Thyroid gland (tissue), 4 donors: ENCODE measurements at regions of chr4 and their contacts with region 1.

Region 1: GRCh38 chr4:142353149-142353738 is 492.9 kb downstream of the INPP4B start:
- DNase-seq: peak in 1 of 2 donors; percentile 18
- H3K4me3 ChIP-seq: no peak overlapping the region
- H3K27ac ChIP-seq: no peak overlapping the region
- H3K4me1 ChIP-seq: peaks cover 11 to 19% of the 10 kb centered on the region in 2 donors
- H3K27me3 ChIP-seq: no peaks in the 10 kb centered on the region
- CTCF ChIP-seq: peak; percentile 59 to 96 (median 86)
- POLR2A ChIP-seq: no peak

Region 2: GRCh38 chr4:142293536-142293935 is 59.7 kb before region 1 on chr4:
- intact Hi-C with region 1: no loop called
- DNase-seq: no peak
- H3K4me3 ChIP-seq: no peak overlapping the region
- H3K27ac ChIP-seq: no peak overlapping the region
- H3K4me1 ChIP-seq: no peaks in the 10 kb centered on the region
- H3K27me3 ChIP-seq: no peaks in the 10 kb centered on the region
- CTCF ChIP-seq: no peak
- POLR2A ChIP-seq: no peak

Region 3: GRCh38 chr4:142474335-142475087 is 121.3 kb after region 1 on chr4:
- intact Hi-C with region 1: no loop called
- DNase-seq: peak; percentile 62 to 71
- H3K4me3 ChIP-seq: no peak overlapping the region
- H3K27ac ChIP-seq: peak overlapping the region in 1 of 3 donors; percentile 29
- H3K4me1 ChIP-seq: peaks cover 8 to 15% of the 10 kb centered on the region in 2 donors
- H3K27me3 ChIP-seq: no peaks in the 10 kb centered on the region
- CTCF ChIP-seq: no peak
- POLR2A ChIP-seq: no peak

Region 4: DNA sequence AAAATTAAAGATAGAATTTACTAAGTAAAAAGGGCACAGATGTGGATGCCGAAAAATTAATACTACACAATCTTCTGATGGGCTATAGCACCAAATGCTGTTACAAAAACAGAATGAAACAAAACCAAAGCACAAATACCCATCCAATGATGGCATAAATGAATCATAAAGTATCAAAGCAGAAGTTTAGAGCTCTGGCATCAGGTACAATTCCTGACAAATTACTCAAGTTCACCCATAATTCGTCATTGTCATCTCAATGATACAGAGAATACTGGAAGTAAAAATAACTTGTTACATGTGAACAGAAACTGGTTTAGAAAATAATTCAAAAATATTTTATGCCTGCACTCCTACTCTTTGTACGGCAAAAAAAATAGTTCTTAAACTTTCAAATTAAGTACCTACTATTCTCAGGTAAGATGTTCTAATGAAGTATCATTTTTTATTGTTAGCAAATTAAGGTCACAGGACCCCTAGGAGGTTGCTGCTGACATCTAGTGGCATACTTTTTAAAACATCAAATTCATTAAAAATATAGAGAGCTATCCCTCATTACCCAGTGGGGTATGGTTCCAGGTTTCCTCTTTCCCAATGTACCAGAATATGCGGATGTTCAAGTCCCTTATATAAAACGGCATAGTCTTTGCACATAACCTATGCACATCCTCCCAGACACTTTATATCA is 366.8 kb after region 1 on chr4:
- intact Hi-C with region 1: loop called (anchors 5 kb)
- DNase-seq: no peak
- H3K4me3 ChIP-seq: no peak overlapping the region
- H3K27ac ChIP-seq: no peak overlapping the region
- H3K4me1 ChIP-seq: no peaks in the 10 kb centered on the region
- H3K27me3 ChIP-seq: no peaks in the 10 kb centered on the region
- CTCF ChIP-seq: peak in 4 of 6 experiments; percentile 21 to 68 (median 63)
- POLR2A ChIP-seq: no peak

Region 5: DNA sequence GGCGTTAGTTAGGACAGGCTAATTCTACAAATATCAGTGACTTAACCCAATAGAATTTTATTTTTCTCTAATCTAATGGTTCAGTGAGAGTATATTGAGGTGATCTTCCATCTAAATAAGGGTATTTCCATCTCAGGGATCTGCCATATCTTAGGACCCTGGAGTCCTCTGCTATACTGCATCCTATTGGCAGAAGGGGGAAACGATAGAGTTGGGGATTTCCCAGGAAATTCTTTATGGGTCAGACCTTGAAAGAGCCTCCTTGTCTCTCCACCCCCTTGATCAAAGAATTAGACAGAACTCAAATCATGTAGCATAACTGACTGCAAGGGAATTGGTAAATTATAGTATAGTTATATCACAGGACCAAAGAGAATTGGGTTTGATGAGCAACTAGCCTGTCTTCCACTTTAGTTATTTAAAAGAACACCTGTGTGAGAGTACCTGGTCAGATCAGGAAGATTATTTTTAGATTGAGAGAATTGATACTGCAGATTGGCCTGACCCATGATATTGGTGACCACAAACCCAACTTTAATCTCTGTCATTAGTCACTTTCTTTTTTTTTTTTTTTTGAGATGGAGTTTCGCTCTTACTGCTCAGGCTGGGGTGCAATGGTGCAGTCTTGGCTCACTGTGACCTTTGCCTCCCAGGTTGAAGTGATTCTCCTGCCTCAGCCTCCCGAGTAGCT is 1185.9 kb after region 1 on chr4:
- intact Hi-C with region 1: no loop called
- DNase-seq: no peak
- H3K4me3 ChIP-seq: no peak overlapping the region
- H3K27ac ChIP-seq: no peak overlapping the region
- H3K4me1 ChIP-seq: no peaks in the 10 kb centered on the region
- H3K27me3 ChIP-seq: no peaks in the 10 kb centered on the region
- CTCF ChIP-seq: no peak
- POLR2A ChIP-seq: no peak